ENCODE measurements at regions of chr11 and their contacts with region 1.

Region 1: GRCh38 chr11:110356756-110357671 is 60.6 kb upstream of the RDX start:
- DNase-seq: peak; percentile 59 to 99
- H3K4me3 ChIP-seq: no peak overlapping the region; the same call in 1 of the 2 replicates
- H3K27ac ChIP-seq: peak overlapping the region; percentile 84
- H3K4me1 ChIP-seq: peaks cover 32% of the 10 kb centered on the region
- H3K27me3 ChIP-seq: no peaks in the 10 kb centered on the region
- CTCF ChIP-seq: no peak

Region 2: GRCh38 chr11:110251837-110252236 is 105.2 kb before region 1 on chr11:
- CTCF ChIA-PET with region 1: no interaction called
- POLR2A ChIA-PET with region 1: interaction called, 4 read pairs
- intact Hi-C with region 1: loop called (anchors 2 kb)
- DNase-seq: peak; percentile 58 to 95
- H3K4me3 ChIP-seq: no peak overlapping the region
- H3K27ac ChIP-seq: peak overlapping the region; percentile 66
- H3K4me1 ChIP-seq: peaks cover 24% of the 10 kb centered on the region
- H3K27me3 ChIP-seq: no peaks in the 10 kb centered on the region
- CTCF ChIP-seq: no peak

Region 3: DNA sequence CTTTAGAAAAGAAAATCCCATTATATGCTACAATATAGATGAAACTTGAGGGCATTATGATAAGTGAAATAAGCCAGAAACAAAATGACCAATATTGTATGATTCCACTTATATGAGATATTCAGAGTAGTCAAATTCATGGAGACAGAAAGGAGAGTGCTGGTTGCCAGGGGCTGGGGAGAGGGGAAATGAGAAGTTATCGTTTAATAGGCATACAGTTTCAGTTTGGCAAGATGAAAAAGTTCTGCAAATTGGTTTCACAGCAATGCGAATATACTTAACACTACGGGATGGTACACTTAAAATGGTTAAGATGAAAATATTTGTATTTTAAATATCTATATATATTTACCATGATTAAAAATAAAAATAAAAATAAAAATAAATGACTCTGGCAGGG is 29.5 kb before region 1 on chr11:
- CTCF ChIA-PET with region 1: no interaction called
- POLR2A ChIA-PET with region 1: interaction called, 3 read pairs
- intact Hi-C with region 1: loop called (anchors 1 kb)
- DNase-seq: no peak
- H3K4me3 ChIP-seq: peak overlapping the region; percentile 33; the same call in 1 of the 2 replicates
- H3K27ac ChIP-seq: peak overlapping the region; percentile 86
- H3K4me1 ChIP-seq: peaks cover 43% of the 10 kb centered on the region
- H3K27me3 ChIP-seq: no peaks in the 10 kb centered on the region
- CTCF ChIP-seq: no peak

Region 4: DNA sequence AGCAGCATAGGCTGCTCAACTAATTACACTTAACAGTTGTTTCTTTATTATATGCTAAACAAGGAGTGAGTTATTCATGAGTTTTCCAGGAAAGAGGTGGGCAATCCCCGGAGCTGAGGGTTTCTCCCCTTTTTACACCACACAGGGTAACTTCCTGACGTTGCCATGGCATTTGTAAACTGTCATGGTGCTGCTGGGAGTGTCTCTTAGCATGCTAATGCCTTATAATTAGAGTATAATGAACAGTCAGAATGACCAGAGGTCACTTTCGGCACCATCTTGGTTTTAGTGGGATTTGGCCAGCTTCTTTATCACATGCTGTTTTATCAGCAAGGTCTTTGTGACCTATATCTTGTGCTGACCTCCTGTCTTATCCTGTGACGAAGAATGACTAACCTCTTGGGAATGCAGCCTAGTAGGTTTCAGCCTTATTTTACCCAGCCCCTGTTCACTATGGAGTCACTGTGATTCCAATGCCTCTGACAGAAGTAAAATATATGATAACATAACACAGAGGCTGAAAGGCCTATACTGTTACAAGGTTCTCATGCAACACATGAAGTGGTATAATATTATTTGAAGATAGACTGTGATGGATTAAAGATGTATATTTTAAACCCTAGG is 19.3 kb before region 1 on chr11:
- CTCF ChIA-PET with region 1: no interaction called
- POLR2A ChIA-PET with region 1: no interaction called
- intact Hi-C with region 1: loop called (anchors 2 kb)
- DNase-seq: peak; percentile 73 to 94
- H3K4me3 ChIP-seq: peak overlapping the region; percentile 3; the same call in 1 of the 2 replicates
- H3K27ac ChIP-seq: peak overlapping the region; percentile 70
- H3K4me1 ChIP-seq: peaks cover 14% of the 10 kb centered on the region
- H3K27me3 ChIP-seq: no peaks in the 10 kb centered on the region
- CTCF ChIP-seq: no peak

Region 5: GRCh38 chr11:112163875-112164685 is 1807.1 kb after region 1 on chr11 and contains the start of gene IL18:
- CTCF ChIA-PET with region 1: no interaction called
- POLR2A ChIA-PET with region 1: no interaction called
- intact Hi-C with region 1: loop called (anchors 5 kb)
- DNase-seq: peak; percentile 75 to 89
- H3K4me3 ChIP-seq: peak within 1 kb of the TSS; percentile 68
- H3K27ac ChIP-seq: peak within 1 kb of the TSS; percentile 87
- H3K4me1 ChIP-seq: peaks cover 75% of the 10 kb centered on the region
- H3K27me3 ChIP-seq: no peaks in the 10 kb centered on the region
- CTCF ChIP-seq: no peak
- total RNA-seq, gene IL18: 42.8 and 59.1 TPM in 2 replicates

Measured in PC-9 (cell line).